ENCODE measurements at regions of chr19 and their contacts with region 1.

Region 1: GRCh38 chr19:52048555-52049501 is at the start of gene ZNF432:
- DNase-seq: peak; percentile 92
- H3K4me3 Mint-ChIP-seq: peak within 1 kb of the TSS; percentile 99
- H3K27ac Mint-ChIP-seq: peak within 1 kb of the TSS; percentile 100
- H3K4me1 Mint-ChIP-seq: peaks cover 11% of the 10 kb centered on the region
- H3K27me3 Mint-ChIP-seq: no peaks in the 10 kb centered on the region
- CTCF ChIP-seq: no peak
- total RNA-seq, gene ZNF432: 17.2 and 25.4 TPM in 2 replicates

Region 2: GRCh38 chr19:51926784-51927742 is 121.8 kb before region 1 on chr19 and contains the start of gene ZNF613:
- CTCF ChIA-PET with region 1: no interaction called
- POLR2A ChIA-PET with region 1: interaction called, 7 read pairs
- intact Hi-C with region 1: loop called (anchors 10 kb)
- DNase-seq: peak; percentile 95
- H3K4me3 Mint-ChIP-seq: peak within 1 kb of the TSS; percentile 91
- H3K27ac Mint-ChIP-seq: peak within 1 kb of the TSS; percentile 89
- H3K4me1 Mint-ChIP-seq: peaks cover 9% of the 10 kb centered on the region
- H3K27me3 Mint-ChIP-seq: no peaks in the 10 kb centered on the region
- CTCF ChIP-seq: no peak
- total RNA-seq, gene ZNF613: 4.9 and 7.7 TPM in 2 replicates

Region 3: DNA sequence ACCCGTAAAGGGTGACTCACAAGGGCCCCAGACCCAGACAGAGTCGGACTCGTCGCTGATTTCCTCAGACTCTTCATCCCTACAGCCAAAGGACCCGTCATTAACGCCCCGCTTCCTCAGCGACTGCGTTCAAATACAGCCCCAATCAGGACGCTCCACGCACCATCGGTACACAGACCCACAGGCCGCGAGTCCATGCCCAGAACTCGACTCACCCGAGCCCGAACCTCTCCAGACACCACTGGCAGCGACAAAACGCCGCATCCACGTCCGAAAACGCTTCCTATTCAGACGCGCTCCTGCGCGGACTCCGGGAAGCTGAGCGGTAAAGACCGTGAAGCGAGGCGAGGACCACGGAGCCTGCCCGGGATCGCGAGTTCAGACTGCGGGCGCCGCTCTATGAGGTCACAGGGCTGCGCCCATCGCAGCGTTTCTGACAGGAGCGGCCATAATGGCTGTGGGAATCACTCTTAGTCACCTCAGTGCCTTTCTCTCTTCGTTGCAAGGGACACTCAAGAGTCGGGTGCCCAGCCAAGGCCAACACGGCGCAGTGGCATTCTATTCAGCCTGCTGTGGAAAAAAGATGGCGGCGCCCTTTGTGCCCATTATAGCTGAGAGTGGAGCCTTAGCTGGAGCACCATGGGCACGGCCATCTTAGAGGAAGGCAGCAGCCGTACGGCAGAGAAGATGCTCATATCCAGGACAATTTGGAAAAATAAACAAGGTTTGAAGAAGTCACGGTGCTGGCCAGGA is 20.6 kb before region 1 on chr19 and contains the start of gene ZNF614:
- CTCF ChIA-PET with region 1: interaction called, 4 read pairs
- POLR2A ChIA-PET with region 1: interaction called, 17 read pairs
- intact Hi-C with region 1: no loop called
- DNase-seq: peak; percentile 88
- H3K4me3 Mint-ChIP-seq: peak within 1 kb of the TSS; percentile 76
- H3K27ac Mint-ChIP-seq: peak within 1 kb of the TSS; percentile 84
- H3K4me1 Mint-ChIP-seq: peaks cover 13% of the 10 kb centered on the region
- H3K27me3 Mint-ChIP-seq: no peaks in the 10 kb centered on the region
- CTCF ChIP-seq: no peak
- total RNA-seq, gene ZNF614: 10.2 and 10.3 TPM in 2 replicates

Region 4: GRCh38 chr19:52095172-52096014 is 46.6 kb after region 1 on chr19 and contains the start of gene ZNF841:
- CTCF ChIA-PET with region 1: no interaction called
- POLR2A ChIA-PET with region 1: interaction called, 18 read pairs
- intact Hi-C with region 1: loop called (anchors 2 kb)
- DNase-seq: peak; percentile 96
- H3K4me3 Mint-ChIP-seq: peak within 1 kb of the TSS; percentile 92
- H3K27ac Mint-ChIP-seq: peak within 1 kb of the TSS; percentile 93
- H3K4me1 Mint-ChIP-seq: peaks cover 25% of the 10 kb centered on the region
- H3K27me3 Mint-ChIP-seq: no peaks in the 10 kb centered on the region
- CTCF ChIP-seq: no peak
- total RNA-seq, gene ZNF841: 40.9 and 49.8 TPM in 2 replicates